Brain microvascular endothelial cell (primary cell): ENCODE measurements at regions of chr17 and their contacts with region 1.

Region 1: DNA sequence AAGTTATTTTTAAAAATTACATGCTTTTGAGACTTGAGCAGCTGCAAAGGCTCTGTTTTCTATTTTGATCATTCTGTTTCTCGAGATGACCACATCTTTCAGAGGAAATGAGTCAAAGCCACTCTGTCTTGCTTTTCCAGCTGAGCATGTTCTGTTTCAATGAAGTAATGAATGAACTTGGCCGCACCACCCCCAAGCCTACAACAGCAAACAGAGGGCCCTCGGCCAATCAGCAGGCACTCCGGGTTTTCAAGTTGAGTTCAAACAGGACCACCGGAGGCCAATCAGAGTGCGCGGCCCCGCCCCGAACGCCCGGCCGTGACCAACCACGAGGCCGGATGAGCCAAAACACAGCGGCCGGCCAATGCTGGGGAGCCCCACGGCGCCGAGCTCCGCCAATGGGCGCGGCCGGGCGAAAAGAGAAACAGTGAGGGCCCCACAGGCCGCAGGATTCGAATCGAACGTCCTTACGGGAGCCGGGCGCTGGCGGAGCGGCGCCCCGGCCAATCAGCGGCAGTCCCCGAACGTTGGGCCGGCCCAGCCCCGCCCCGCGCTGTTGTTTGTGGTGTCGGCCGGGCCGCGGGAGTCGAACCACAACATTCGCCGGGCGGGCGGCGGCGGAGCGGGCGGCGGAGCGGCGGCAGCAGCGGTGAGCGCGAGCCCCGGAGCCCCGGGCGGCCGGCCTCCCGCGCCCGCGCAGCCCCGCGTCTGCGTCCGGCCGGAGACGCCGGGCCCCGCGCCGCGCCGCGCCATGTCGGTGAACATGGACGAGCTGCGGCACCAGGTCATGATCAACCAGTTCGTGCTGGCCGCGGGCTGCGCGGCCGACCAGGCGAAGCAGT is at the start of gene UBALD2:
- DNase-seq: peak; percentile 100
- H3K4me3 ChIP-seq: peak within 1 kb of the TSS; percentile 81
- H3K27ac ChIP-seq: peak within 1 kb of the TSS; percentile 89
- H3K27me3 ChIP-seq: no peaks in the 10 kb centered on the region
- CTCF ChIP-seq: no peak

Region 2: DNA sequence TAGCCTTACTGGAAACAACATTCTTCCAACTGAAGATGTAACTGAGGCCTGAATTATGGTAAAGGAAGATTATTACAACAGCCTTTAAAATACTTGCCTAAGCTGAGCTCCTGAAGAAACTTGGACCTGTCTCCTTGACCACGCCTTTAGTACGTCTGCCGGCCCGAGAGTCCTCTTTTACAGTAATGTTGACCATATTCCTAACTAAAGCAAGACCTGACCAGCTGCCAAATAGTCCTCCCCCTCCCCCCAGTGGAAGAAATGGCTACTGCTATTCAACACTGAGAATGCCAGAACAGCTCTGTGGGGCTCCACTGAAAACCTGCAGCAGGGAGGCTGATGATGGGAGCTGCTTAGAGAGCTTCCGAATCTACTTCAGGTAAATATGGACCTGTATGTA is 111.3 kb before region 1 on chr17:
- in situ Hi-C with region 1: loop called (anchors 25 kb)
- DNase-seq: peak; percentile 27
- H3K4me3 ChIP-seq: no peak overlapping the region
- H3K27ac ChIP-seq: no peak overlapping the region
- H3K27me3 ChIP-seq: no peaks in the 10 kb centered on the region
- CTCF ChIP-seq: peak; percentile 44